ENCODE measurements at regions of chr16 and their contacts with region 1.

Region 1: DNA sequence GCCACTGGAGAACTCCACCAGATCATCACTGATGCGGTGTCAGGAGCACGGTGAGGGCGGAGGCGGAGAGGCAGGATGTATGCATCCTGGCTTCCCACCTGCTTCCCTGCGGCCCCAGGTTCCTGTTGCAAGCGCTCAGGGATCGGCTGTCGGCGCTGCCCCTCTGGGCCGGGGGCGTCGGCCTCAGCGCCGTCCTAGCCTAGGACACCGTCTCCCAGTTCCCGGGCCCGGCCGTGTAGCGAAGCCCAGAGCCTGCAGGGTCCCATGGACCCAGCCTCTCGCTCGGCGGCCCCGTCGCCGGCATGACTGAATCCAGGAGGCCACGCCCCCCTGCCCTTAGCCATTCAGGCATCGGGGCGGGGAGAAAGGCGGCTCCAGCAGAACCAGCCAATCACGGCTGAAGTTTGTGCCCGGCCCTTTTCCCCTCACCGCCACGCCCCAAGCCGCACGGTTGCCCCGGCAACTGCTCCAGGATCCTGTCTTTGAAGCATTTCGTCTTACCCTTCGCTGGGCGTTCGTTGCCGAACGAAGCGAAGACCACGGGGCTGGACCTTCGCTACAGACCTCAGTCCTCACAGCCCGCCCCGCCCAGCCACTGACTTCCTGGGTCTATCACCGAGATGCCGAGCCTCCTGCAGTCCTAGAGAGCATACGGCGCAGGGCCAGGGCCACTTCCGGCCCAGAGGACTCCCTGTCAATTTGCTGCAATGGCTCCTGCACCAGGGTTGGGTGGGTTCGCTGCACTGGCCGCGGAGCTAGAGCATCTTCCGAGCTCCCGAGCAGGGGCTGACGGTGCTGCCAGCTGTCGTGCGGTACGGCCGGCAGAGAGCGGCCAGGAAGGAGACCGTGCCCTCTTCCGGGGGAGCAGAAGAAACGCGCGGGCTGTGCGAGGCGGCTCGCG is 10.6 kb upstream of the ZNF213 start:
- DNase-seq: peak; percentile 96 to 97
- ATAC-seq: peak; percentile 93 to 98 (median 98)
- H3K4me3 ChIP-seq: peak overlapping the region; percentile 39 to 99 (median 71)
- H3K27ac ChIP-seq: peak overlapping the region; percentile 25 to 90 (median 76)
- H3K4me1 ChIP-seq: peaks cover 4 to 43% (median 29%) of the 10 kb centered on the region in 9 donors
- H3K27me3 ChIP-seq: no peaks in the 10 kb centered on the region
- CTCF ChIP-seq: peak in 5 of 9 donors; percentile 29 to 48 (median 37)

Region 2: GRCh38 chr16:3106205-3106928 is 17.9 kb before region 1 on chr16:
- intact Hi-C with region 1: loop called in 1 of 10 experiments (anchors 2 kb)
- DNase-seq: peak; percentile 89 to 90
- ATAC-seq: peak; percentile 91 to 97 (median 94)
- H3K4me3 ChIP-seq: peak overlapping the region; percentile 40 to 79 (median 66)
- H3K27ac ChIP-seq: peak overlapping the region; percentile 63 to 97 (median 86)
- H3K4me1 ChIP-seq: peaks cover 6 to 38% (median 32%) of the 10 kb centered on the region in 9 donors
- H3K27me3 ChIP-seq: no peaks in the 10 kb centered on the region
- CTCF ChIP-seq: peak in 1 of 9 donors; percentile 6